BJ (cell line): ENCODE measurements at regions of chr6 and their contacts with region 1.

Region 1: DNA sequence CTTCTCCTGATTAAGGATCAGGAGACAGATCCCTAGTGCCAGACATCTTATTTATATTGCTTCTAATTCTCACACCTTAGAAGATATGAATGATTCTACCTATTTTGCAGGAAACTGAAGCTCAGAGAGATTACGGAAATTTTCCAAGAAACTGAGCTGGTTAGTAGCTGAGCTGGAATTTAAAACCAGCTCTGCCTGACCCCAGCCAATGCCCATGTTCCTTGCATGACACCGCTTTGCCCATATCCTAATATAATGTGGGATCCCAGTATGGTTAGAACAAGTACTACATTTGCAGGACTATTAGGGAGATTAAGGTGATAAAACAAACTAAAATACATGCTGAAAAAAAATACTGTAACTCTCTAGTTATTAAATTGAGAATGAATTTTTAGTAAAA is 1.9 kb downstream of the TMEM30A start:
- DNase-seq: no peak
- H3K4me3 ChIP-seq: peak overlapping the region; percentile 98
- H3K27me3 ChIP-seq: no peaks in the 10 kb centered on the region
- CTCF ChIP-seq: no peak

Region 2: GRCh38 chr6:75243333-75244062 is 39.2 kb before region 1 on chr6 and contains the start of gene COX7A2:
- CTCF ChIA-PET with region 1: no interaction called
- POLR2A ChIA-PET with region 1: interaction called, 13 read pairs
- DNase-seq: peak; percentile 96
- H3K4me3 ChIP-seq: peak within 1 kb of the TSS; percentile 68
- H3K27me3 ChIP-seq: no peaks in the 10 kb centered on the region
- CTCF ChIP-seq: no peak
- polyA plus RNA-seq, gene COX7A2: 133 and 214 TPM in 2 replicates

Region 3: GRCh38 chr6:75317503-75318206 is 34.9 kb after region 1 on chr6:
- CTCF ChIA-PET with region 1: no interaction called
- POLR2A ChIA-PET with region 1: no interaction called
- DNase-seq: peak; percentile 51
- H3K4me3 ChIP-seq: no peak overlapping the region
- H3K27me3 ChIP-seq: no peaks in the 10 kb centered on the region; the same call in 1 of the 2 replicates
- CTCF ChIP-seq: no peak